ENCODE measurements at regions of chr10 and their contacts with region 1.

Region 1: GRCh38 chr10:22436884-22437619 is 91.8 kb downstream of the SPAG6 start:
- DNase-seq: peak; percentile 89 to 90 (median 89)
- H3K4me3 ChIP-seq: peak overlapping the region; percentile 82 to 87
- H3K4me3 Mint-ChIP-seq: peak overlapping the region; percentile 92 to 97 (median 96)
- H3K27ac ChIP-seq: peak overlapping the region; percentile 90
- H3K27ac Mint-ChIP-seq: peak overlapping the region; percentile 96 to 99 (median 98)
- H3K4me1 ChIP-seq: peaks cover 15% of the 10 kb centered on the region
- H3K4me1 Mint-ChIP-seq: peaks cover 24 to 53% (median 28%) of the 10 kb centered on the region in 4 donors
- H3K27me3 ChIP-seq: no peaks in the 10 kb centered on the region
- H3K27me3 Mint-ChIP-seq: no peaks in the 10 kb centered on the region

Region 2: GRCh38 chr10:21533467-21534279 is 903.4 kb before region 1 on chr10 and contains the start of gene MLLT10:
- CTCF ChIA-PET with region 1: no interaction called
- POLR2A ChIA-PET with region 1: interaction called, 5 read pairs
- intact Hi-C with region 1: loop called (anchors 2 kb)
- DNase-seq: peak; percentile 93 to 96 (median 95)
- H3K4me3 ChIP-seq: peak within 1 kb of the TSS; percentile 69 to 88
- H3K4me3 Mint-ChIP-seq: peak within 1 kb of the TSS; percentile 92 to 99 (median 95)
- H3K27ac ChIP-seq: peak within 1 kb of the TSS; percentile 63
- H3K27ac Mint-ChIP-seq: peak within 1 kb of the TSS; percentile 85 to 98 (median 95)
- H3K4me1 ChIP-seq: peaks cover 19% of the 10 kb centered on the region
- H3K4me1 Mint-ChIP-seq: peaks cover 10 to 33% (median 21%) of the 10 kb centered on the region in 4 donors
- H3K27me3 ChIP-seq: no peaks in the 10 kb centered on the region
- H3K27me3 Mint-ChIP-seq: no peaks in the 10 kb centered on the region
- total RNA-seq, gene MLLT10: 64.6 to 73.4 TPM

Region 3: DNA sequence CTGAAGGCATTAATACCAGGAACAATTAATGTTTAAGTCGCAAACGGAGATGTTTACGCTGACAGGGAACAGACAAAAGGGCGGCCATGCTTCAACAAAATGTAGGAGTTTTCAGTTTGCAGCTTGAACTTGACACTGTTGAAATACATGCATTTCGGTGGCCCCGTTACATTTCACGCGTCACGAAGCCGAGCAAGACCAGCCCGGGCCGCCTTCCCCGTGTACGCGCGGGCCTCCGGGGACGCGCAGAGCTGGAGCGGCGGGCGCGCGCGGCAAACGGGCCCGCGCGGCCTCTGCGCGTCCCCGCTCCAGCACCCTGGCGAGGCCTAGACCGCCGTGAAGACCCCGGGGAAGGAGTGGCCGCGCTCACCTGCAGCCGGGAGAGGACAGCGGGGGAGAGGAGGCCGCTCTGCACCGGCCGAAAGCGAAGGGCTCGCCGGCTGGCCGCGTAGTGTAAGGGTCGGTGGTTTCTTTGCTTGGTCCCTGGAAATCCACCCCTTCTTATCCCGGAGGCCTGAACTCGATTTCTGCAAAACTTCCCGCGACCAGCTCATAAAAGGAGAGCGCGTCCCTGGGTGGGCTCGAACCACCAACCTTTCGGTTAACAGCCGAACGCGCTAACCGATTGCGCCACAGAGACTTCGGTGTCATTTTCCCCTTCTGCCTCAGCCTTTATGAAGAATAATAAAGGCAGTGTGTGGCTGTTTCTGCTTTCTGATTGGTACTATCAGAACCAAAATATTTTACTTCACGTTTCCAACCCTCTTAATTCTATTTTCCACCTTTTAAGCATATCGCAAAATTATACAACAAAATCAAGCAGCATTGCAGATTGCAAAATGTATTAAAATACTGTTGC is 207.9 kb before region 1 on chr10:
- CTCF ChIA-PET with region 1: interaction called, 15 read pairs
- POLR2A ChIA-PET with region 1: interaction called, 68 read pairs
- intact Hi-C with region 1: loop called (anchors 1 kb)
- DNase-seq: peak; percentile 90 to 92 (median 92)
- H3K4me3 ChIP-seq: peak overlapping the region; percentile 61
- H3K4me3 Mint-ChIP-seq: peak overlapping the region; percentile 87 to 98 (median 95)
- H3K27ac ChIP-seq: peak overlapping the region; percentile 61
- H3K27ac Mint-ChIP-seq: peak overlapping the region; percentile 86 to 100 (median 99)
- H3K4me1 ChIP-seq: peaks cover 15% of the 10 kb centered on the region
- H3K4me1 Mint-ChIP-seq: peaks cover 15 to 35% (median 16%) of the 10 kb centered on the region in 4 donors
- H3K27me3 ChIP-seq: no peaks in the 10 kb centered on the region
- H3K27me3 Mint-ChIP-seq: peaks cover 5 to 7% of the 10 kb centered on the region in 2 donors

Region 4: DNA sequence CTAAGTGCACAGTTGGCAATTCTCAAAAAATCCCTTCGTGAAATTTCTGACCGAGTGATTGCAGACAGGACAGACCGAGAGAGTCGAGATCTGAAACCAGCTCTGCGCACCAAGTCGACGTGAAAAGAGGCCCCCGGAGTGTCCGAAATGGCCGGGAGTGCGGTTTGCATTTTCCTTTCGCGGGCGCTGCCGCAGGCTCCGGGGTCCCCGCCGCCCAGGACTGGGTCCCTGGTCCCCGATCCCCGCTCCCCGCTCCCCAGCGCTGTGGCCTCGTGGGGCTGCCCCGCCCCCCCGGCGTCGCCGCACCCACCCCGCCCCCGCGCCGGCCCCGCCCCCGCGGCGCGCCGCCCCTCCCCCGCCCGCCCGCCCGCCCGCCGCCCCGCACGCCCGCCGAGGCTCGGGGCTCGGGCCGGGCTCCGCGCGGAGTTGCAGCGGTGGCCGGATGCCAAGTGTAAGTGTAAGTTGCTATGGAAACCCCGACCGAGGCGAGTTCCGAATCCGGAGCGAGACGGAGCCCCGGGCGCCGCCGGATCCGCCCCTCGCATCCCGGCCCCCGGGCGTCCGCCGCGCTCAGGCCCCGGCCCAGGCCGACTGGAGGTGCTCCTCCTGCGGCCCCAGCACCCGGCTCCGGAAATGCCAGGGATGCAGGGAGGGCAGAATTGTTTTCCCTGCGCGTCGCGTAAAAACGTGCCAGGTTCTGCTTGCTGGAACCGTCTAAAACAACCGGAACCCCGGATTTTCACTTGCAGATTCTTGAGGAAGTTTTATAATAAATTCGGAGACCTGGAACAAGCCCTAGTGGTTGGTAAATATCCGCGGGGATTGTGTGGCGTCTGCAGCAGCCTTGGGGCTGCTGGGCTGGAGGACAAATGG is 111.5 kb before region 1 on chr10:
- CTCF ChIA-PET with region 1: no interaction called
- POLR2A ChIA-PET with region 1: interaction called, 53 read pairs
- intact Hi-C with region 1: no loop called
- DNase-seq: peak; percentile 83 to 86 (median 84)
- H3K4me3 ChIP-seq: peak overlapping the region; percentile 40 to 68
- H3K4me3 Mint-ChIP-seq: peak overlapping the region; percentile 85 to 94 (median 88)
- H3K27ac ChIP-seq: peak overlapping the region; percentile 65
- H3K27ac Mint-ChIP-seq: peak overlapping the region; percentile 81 to 97 (median 91)
- H3K4me1 ChIP-seq: peaks cover 39% of the 10 kb centered on the region
- H3K4me1 Mint-ChIP-seq: peaks cover 35 to 44% (median 39%) of the 10 kb centered on the region in 4 donors
- H3K27me3 ChIP-seq: no peaks in the 10 kb centered on the region
- H3K27me3 Mint-ChIP-seq: peaks cover 10 to 13% of the 10 kb centered on the region in 2 donors

Region 5: DNA sequence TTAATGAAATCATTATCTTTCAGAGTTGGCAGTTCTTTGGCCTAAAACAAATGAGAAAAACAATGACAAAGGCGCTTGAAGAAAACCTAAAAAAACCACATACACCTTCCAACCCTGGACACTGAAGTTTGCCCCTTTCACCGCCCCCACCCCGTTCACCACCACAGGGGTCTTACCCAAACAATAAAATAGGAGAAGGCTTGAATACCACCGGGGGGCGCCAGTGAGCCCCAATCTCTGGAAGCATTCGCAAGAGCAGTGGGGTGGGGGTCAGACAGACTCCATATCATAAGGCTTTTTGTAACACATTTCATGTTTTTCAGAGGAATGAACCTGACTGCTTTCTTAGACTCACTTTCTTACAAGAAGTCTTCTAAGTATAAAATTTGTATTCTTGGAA is 113.7 kb after region 1 on chr10:
- CTCF ChIA-PET with region 1: no interaction called
- POLR2A ChIA-PET with region 1: no interaction called
- intact Hi-C with region 1: loop called (anchors 1 kb)
- DNase-seq: peak; percentile 54 to 66 (median 59)
- H3K4me3 ChIP-seq: no peak overlapping the region
- H3K4me3 Mint-ChIP-seq: no peak overlapping the region
- H3K27ac ChIP-seq: no peak overlapping the region
- H3K27ac Mint-ChIP-seq: peak overlapping the region in 4 of 7 donors; percentile 2 to 86 (median 42)
- H3K4me1 ChIP-seq: no peaks in the 10 kb centered on the region
- H3K4me1 Mint-ChIP-seq: peaks cover 12 to 15% (median 13%) of the 10 kb centered on the region in 4 donors
- H3K27me3 ChIP-seq: no peaks in the 10 kb centered on the region
- H3K27me3 Mint-ChIP-seq: no peaks in the 10 kb centered on the region

Region 6: GRCh38 chr10:22648547-22648961 is 211.5 kb after region 1 on chr10:
- CTCF ChIA-PET with region 1: no interaction called
- POLR2A ChIA-PET with region 1: interaction called, 10 read pairs
- intact Hi-C with region 1: no loop called
- DNase-seq: peak in 1 of 5 donors; percentile 27
- H3K4me3 ChIP-seq: peak overlapping the region in 1 of 2 donors; percentile 44
- H3K4me3 Mint-ChIP-seq: peak overlapping the region; percentile 67 to 91 (median 78)
- H3K27ac ChIP-seq: peak overlapping the region; percentile 61
- H3K27ac Mint-ChIP-seq: peak overlapping the region; percentile 85 to 96 (median 95)
- H3K4me1 ChIP-seq: peaks cover 100% of the 10 kb centered on the region
- H3K4me1 Mint-ChIP-seq: peaks cover 82 to 96% (median 90%) of the 10 kb centered on the region in 4 donors
- H3K27me3 ChIP-seq: no peaks in the 10 kb centered on the region
- H3K27me3 Mint-ChIP-seq: no peaks in the 10 kb centered on the region

Measured in CD4-positive, alpha-beta memory T cell (primary cell).